Activated naive CD8-positive, alpha-beta T cell treated with anti-CD3 and anti-CD28 coated beads, Interleukin-2, amount 10 ng/mL, durations not matched to agents 7 days and 5 days (primary cell): ENCODE measurements at regions of chr12 and their contacts with region 1.

Region 1: GRCh38 chr12:95003213-95003920 is at the start of gene NDUFA12:
- DNase-seq: peak; percentile 96
- ATAC-seq: peak; percentile 99
- H3K4me3 Mint-ChIP-seq: peak within 1 kb of the TSS; percentile 92
- H3K27ac Mint-ChIP-seq: peak within 1 kb of the TSS; percentile 88
- H3K4me1 Mint-ChIP-seq: peaks cover 32% of the 10 kb centered on the region
- H3K27me3 Mint-ChIP-seq: no peaks in the 10 kb centered on the region
- total RNA-seq, gene NDUFA12: 105 to 114 TPM

Region 2: DNA sequence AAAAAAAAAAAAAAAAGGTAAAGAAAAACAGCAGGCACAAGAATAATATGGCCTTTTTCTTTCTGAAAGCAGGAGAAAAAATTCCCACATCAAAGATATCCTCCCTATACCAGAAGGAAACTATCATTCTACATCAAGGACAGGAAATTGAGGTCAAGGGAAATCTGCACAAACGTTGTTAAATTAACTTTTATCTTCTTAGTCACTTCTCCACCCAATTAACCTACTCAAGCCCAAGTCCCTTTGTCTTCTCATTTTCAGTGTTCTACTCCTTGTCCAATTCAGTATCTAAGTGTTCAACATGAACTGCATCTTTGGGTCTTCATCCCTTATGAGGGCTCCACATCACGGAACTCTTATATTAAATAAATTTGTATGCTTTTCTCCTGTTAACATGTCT is 15.6 kb before region 1 on chr12:
- POLR2A ChIA-PET with region 1: interaction called, 18 read pairs
- DNase-seq: no peak
- ATAC-seq: peak; percentile 55
- H3K4me3 Mint-ChIP-seq: peak overlapping the region; percentile 68
- H3K27ac Mint-ChIP-seq: peak overlapping the region; percentile 75
- H3K4me1 Mint-ChIP-seq: peaks cover 45% of the 10 kb centered on the region
- H3K27me3 Mint-ChIP-seq: no peaks in the 10 kb centered on the region

Region 3: GRCh38 chr12:95072900-95073697 is 69.7 kb after region 1 on chr12 and contains the start of gene NR2C1:
- POLR2A ChIA-PET with region 1: interaction called, 11 read pairs
- DNase-seq: peak; percentile 88
- ATAC-seq: peak; percentile 98
- H3K4me3 Mint-ChIP-seq: peak within 1 kb of the TSS; percentile 96
- H3K27ac Mint-ChIP-seq: peak within 1 kb of the TSS; percentile 85
- H3K4me1 Mint-ChIP-seq: peaks cover 6% of the 10 kb centered on the region
- H3K27me3 Mint-ChIP-seq: no peaks in the 10 kb centered on the region
- total RNA-seq, gene NR2C1: 38.4 to 46.5 TPM